PC-3 (cell line): ENCODE measurements at regions of chr3 and their contacts with region 1.

Region 1: GRCh38 chr3:96070669-96071068 is 743.7 kb upstream of the EPHA6 start:
- DNase-seq: no peak
- ATAC-seq: no peak
- H3K4me3 ChIP-seq: no peak overlapping the region
- H3K27ac ChIP-seq: no peak overlapping the region
- H3K4me1 ChIP-seq: no peaks in the 10 kb centered on the region
- H3K27me3 ChIP-seq: no peaks in the 10 kb centered on the region
- CTCF ChIP-seq: no peak

Region 2: DNA sequence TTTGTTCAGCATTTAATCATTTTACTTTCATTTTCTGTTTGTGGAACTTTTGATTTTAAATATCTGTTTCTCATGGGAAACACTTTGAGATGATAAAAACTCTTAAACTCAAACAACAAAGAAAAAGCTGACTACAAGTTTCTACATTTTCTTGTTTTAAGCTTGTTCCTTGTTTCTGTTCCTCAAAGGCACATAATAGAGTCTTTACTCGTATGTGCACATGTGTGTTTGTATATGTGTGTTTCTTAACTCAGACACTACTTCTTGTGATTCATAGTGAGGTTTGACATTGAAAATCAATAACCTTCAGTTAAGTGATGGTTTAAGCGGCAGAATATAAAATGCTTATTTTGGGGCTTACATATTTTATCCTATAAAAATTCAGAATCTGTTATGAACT is 43.0 kb before region 1 on chr3:
- CTCF ChIA-PET with region 1: no interaction called
- POLR2A ChIA-PET with region 1: interaction called, 13 read pairs
- intact Hi-C with region 1: no loop called
- DNase-seq: no peak
- ATAC-seq: no peak
- H3K4me3 ChIP-seq: peak overlapping the region; percentile 27; the same call in 1 of the 2 replicates
- H3K27ac ChIP-seq: no peak overlapping the region
- H3K4me1 ChIP-seq: no peaks in the 10 kb centered on the region
- H3K27me3 ChIP-seq: no peaks in the 10 kb centered on the region
- CTCF ChIP-seq: no peak